ENCODE measurements at regions of chr12 and their contacts with region 1.

Region 1: DNA sequence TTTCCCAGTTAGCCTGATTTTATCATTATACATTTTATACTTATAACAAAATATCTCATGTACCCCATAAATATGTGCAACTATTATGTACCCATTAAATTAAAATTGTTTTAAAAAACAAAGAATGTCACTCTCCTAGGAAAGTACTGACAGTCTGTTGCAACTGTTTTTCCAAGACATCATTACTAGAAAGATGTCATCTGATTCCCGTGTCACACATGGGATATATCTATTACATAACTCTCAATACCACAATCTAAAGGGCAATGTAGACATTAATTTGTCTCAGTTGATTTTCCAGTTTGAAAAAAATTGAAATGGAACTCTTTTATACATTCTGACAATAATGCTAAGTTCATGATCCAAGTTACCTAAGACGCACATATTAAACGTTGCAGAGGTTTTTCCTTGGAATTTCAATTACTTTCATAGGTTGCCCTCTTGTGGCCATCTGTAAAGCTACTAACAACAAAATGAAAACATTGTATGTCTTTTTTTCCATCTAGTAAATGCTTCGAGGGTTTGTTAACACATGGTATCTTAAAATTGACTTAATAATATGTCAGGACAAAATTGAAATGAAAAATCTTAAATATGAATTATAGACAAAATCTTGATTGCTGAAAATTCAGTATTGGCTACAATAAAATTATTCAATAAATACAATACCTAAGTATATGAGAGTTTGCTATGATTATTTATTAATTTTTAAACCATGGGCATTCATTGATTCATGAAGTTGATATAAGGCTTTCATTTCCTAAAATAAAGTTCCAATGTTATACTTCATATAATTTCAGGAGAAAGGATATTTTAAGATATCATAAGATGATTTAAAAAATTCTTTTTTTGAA is 131.6 kb downstream of the PPFIA2 start:
- DNase-seq: no peak
- H3K4me3 ChIP-seq: no peak overlapping the region
- H3K27ac ChIP-seq: no peak overlapping the region
- H3K4me1 ChIP-seq: no peaks in the 10 kb centered on the region
- H3K27me3 ChIP-seq: no peaks in the 10 kb centered on the region
- CTCF ChIP-seq: peak; percentile 54 to 60

Region 2: GRCh38 chr12:81450920-81451739 is 176.4 kb before region 1 on chr12:
- intact Hi-C with region 1: loop called (anchors 5 kb)
- DNase-seq: no peak
- H3K4me3 ChIP-seq: no peak overlapping the region
- H3K27ac ChIP-seq: no peak overlapping the region
- H3K4me1 ChIP-seq: peaks cover 0 to 4% (median 0%) of the 10 kb centered on the region in 4 donors
- H3K27me3 ChIP-seq: no peaks in the 10 kb centered on the region
- CTCF ChIP-seq: peak; percentile 51

Region 3: DNA sequence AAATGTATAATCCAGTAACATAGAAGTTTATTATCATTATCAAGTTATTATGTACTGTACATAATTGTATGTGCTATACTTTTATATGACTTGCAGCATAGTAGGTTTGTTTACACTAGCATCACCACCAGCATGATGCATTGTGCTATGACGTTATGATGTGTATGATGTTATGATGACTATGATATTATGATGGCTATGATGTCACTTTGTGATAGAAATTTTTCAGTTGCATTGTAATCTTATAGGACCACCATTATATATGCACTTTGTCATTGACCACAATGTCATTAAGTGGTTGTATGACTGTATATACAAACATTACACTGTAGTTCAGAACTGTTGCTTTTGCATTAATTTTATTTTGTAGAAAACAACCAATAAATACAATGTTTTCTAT is 41.8 kb before region 1 on chr12:
- intact Hi-C with region 1: no loop called
- DNase-seq: no peak
- H3K4me3 ChIP-seq: no peak overlapping the region
- H3K27ac ChIP-seq: no peak overlapping the region
- H3K4me1 ChIP-seq: no peaks in the 10 kb centered on the region
- H3K27me3 ChIP-seq: no peaks in the 10 kb centered on the region
- CTCF ChIP-seq: no peak

Region 4: DNA sequence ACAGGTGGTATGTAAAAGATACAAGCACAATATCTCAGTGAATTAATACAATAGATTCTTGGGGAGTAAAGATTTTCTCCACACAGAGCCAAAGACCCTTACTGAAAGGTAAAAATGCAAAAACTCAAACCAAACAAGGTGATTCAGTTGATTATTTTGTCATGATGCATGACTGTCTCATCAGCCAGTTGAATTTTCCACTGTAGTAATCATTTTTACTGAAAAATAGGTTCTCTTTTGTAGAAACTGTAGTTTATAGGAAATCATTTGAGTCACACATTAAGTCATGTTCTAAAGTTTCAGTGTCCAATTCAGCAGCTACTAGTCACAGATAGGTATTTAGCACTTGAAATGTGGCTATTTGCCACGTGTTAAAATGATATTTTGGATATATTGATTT is 78.0 kb after region 1 on chr12:
- intact Hi-C with region 1: no loop called
- DNase-seq: no peak
- H3K4me3 ChIP-seq: no peak overlapping the region
- H3K27ac ChIP-seq: no peak overlapping the region
- H3K4me1 ChIP-seq: no peaks in the 10 kb centered on the region
- H3K27me3 ChIP-seq: no peaks in the 10 kb centered on the region
- CTCF ChIP-seq: no peak